Naive thymus-derived CD4-positive, alpha-beta T cell (primary cell): ENCODE measurements at regions of chr2 and their contacts with region 1.

Region 1: DNA sequence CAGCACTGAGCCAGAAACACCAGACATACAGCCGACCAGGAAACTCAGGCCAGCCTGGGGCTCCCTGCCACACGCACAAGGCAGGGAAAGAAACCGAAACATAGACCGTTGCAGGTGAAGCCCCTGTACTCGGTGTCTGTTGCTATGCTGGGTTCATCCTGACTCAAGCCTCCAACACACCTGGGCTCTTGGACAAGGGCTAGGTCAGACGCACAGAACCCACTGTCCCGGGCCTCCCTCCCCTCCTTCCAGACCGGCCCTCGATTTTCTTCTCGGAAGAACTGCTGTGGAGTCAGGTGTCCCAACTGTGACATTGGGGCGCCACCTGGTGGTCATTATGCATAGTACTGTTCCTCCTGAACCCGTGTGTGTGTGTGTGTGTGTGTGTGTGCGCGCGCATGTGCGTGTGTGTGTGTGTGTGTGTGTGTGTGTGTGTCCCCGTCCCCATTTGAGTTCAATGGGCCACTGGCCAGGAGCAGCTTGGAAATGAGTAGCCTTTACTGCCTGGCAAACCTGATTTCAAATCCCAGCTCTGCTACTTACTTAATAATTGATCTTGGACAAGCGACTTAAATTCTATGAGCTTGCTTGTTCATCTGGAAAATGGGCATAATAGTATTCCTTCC is 55.4 kb upstream of the GLI2 start:
- DNase-seq: peak; percentile 44 to 65 (median 59)
- ATAC-seq: peak; percentile 83
- H3K4me3 ChIP-seq: no peak overlapping the region
- H3K4me3 Mint-ChIP-seq: peak overlapping the region in 6 of 10 donors; percentile 0 to 48 (median 21)
- H3K27ac ChIP-seq: no peak overlapping the region
- H3K27ac Mint-ChIP-seq: peak overlapping the region in 6 of 9 donors; percentile 45 to 80 (median 72)
- H3K4me1 ChIP-seq: peaks cover 4% of the 10 kb centered on the region in 2 donors
- H3K4me1 Mint-ChIP-seq: peaks cover 0 to 5% (median 0%) of the 10 kb centered on the region in 7 donors
- H3K27me3 ChIP-seq: no peaks in the 10 kb centered on the region
- H3K27me3 Mint-ChIP-seq: peaks cover 18 to 50% (median 31%) of the 10 kb centered on the region in 5 donors

Region 2: GRCh38 chr2:118882709-118883210 is 1797.5 kb before region 1 on chr2:
- CTCF ChIA-PET with region 1: no interaction called
- POLR2A ChIA-PET with region 1: no interaction called
- intact Hi-C with region 1: loop called in 1 of 2 experiments (anchors 5 kb)
- DNase-seq: peak; percentile 27 to 74 (median 59)
- ATAC-seq: peak; percentile 92
- H3K4me3 ChIP-seq: peak overlapping the region; percentile 53
- H3K4me3 Mint-ChIP-seq: peak overlapping the region; percentile 49 to 84 (median 76)
- H3K27ac ChIP-seq: no peak overlapping the region
- H3K27ac Mint-ChIP-seq: peak overlapping the region in 7 of 9 donors; percentile 10 to 83 (median 75)
- H3K4me1 ChIP-seq: peaks cover 3 to 18% of the 10 kb centered on the region in 2 donors
- H3K4me1 Mint-ChIP-seq: peaks cover 7 to 24% (median 21%) of the 10 kb centered on the region in 7 donors
- H3K27me3 ChIP-seq: no peaks in the 10 kb centered on the region
- H3K27me3 Mint-ChIP-seq: peaks cover 0 to 17% (median 11%) of the 10 kb centered on the region in 5 donors

Region 3: DNA sequence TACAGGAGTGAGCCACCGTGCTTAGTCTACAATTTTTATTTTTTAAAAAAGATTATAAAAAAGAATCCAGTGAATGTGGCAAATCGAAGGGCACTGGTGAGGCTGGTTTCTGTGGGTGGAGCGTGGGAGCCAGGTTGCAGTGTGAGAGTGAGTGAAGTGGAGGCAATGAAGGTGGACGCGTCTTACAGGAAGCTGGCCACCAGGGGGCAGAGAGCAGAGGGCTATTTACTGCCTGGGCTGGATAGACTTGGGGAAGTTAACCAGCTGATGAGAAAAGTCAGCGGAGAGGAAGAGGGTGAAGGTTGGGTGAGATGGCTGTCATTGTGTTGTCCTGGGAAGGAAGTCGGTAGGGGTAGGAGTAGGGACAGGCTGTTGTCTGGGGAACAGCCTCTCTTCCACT is 1162.8 kb before region 1 on chr2:
- CTCF ChIA-PET with region 1: no interaction called
- POLR2A ChIA-PET with region 1: no interaction called
- intact Hi-C with region 1: loop called in 1 of 2 experiments (anchors 2 kb)
- DNase-seq: peak in 5 of 9 donors; percentile 4 to 40 (median 18)
- ATAC-seq: peak; percentile 59
- H3K4me3 ChIP-seq: no peak overlapping the region
- H3K4me3 Mint-ChIP-seq: no peak overlapping the region
- H3K27ac ChIP-seq: no peak overlapping the region
- H3K27ac Mint-ChIP-seq: no peak overlapping the region
- H3K4me1 ChIP-seq: no peaks in the 10 kb centered on the region
- H3K4me1 Mint-ChIP-seq: no peaks in the 10 kb centered on the region
- H3K27me3 ChIP-seq: no peaks in the 10 kb centered on the region
- H3K27me3 Mint-ChIP-seq: peaks cover 13 to 55% (median 41%) of the 10 kb centered on the region in 5 donors

Region 4: DNA sequence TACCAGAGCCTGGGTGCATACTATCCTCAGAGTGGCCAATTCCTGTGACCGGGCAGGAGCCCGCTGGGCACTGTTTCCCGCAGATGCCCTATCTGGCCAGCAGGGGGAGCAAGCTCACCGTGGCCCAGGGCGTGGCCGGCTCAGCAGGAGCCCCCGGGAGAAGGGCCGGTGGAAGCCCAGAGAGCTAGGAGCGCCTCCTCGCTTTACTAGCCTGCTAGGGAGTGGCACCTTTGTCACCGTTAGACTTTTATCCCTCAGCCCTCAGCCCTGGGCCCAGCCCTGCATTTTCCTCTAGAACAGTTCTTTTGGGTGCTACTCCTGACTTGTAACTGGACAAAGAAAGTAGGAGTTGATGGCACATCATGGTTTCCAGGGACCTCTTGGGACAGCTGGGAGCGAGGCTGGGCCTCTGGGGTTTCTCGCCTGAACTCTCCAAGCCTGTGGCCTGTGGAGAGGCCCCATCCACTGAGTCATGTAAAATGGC is 977.3 kb before region 1 on chr2:
- CTCF ChIA-PET with region 1: no interaction called
- POLR2A ChIA-PET with region 1: no interaction called
- intact Hi-C with region 1: loop called (anchors 2 to 5 kb)
- DNase-seq: peak; percentile 26 to 69 (median 53)
- ATAC-seq: peak; percentile 92
- H3K4me3 ChIP-seq: peak overlapping the region; percentile 16
- H3K4me3 Mint-ChIP-seq: no peak overlapping the region
- H3K27ac ChIP-seq: no peak overlapping the region
- H3K27ac Mint-ChIP-seq: peak overlapping the region in 2 of 9 donors; percentile 6 to 56
- H3K4me1 ChIP-seq: peaks cover 6 to 9% of the 10 kb centered on the region in 2 donors
- H3K4me1 Mint-ChIP-seq: peaks cover 0 to 23% (median 13%) of the 10 kb centered on the region in 7 donors
- H3K27me3 ChIP-seq: no peaks in the 10 kb centered on the region
- H3K27me3 Mint-ChIP-seq: peaks cover 0 to 4% (median 0%) of the 10 kb centered on the region in 5 donors

Region 5: GRCh38 chr2:120109186-120110061 is 570.8 kb before region 1 on chr2:
- CTCF ChIA-PET with region 1: no interaction called
- POLR2A ChIA-PET with region 1: no interaction called
- intact Hi-C with region 1: loop called (anchors 1 kb)
- DNase-seq: peak in 7 of 9 donors; percentile 14 to 73 (median 67)
- ATAC-seq: peak; percentile 80
- H3K4me3 ChIP-seq: peak overlapping the region; percentile 34
- H3K4me3 Mint-ChIP-seq: peak overlapping the region; percentile 30 to 87 (median 70)
- H3K27ac ChIP-seq: peak overlapping the region; percentile 39
- H3K27ac Mint-ChIP-seq: peak overlapping the region; percentile 10 to 90 (median 72)
- H3K4me1 ChIP-seq: peaks cover 17 to 21% of the 10 kb centered on the region in 2 donors
- H3K4me1 Mint-ChIP-seq: peaks cover 19 to 44% (median 36%) of the 10 kb centered on the region in 7 donors
- H3K27me3 ChIP-seq: no peaks in the 10 kb centered on the region
- H3K27me3 Mint-ChIP-seq: peaks cover 0 to 33% (median 0%) of the 10 kb centered on the region in 5 donors

Region 6: GRCh38 chr2:120174963-120175581 is 505.2 kb before region 1 on chr2:
- CTCF ChIA-PET with region 1: no interaction called
- POLR2A ChIA-PET with region 1: no interaction called
- intact Hi-C with region 1: no loop called
- DNase-seq: peak in 7 of 9 donors; percentile 37 to 63 (median 56)
- ATAC-seq: no peak
- H3K4me3 ChIP-seq: no peak overlapping the region
- H3K4me3 Mint-ChIP-seq: peak overlapping the region in 5 of 10 donors; percentile 7 to 50 (median 20)
- H3K27ac ChIP-seq: peak overlapping the region; percentile 79
- H3K27ac Mint-ChIP-seq: peak overlapping the region in 8 of 9 donors; percentile 84 to 99 (median 96)
- H3K4me1 ChIP-seq: peaks cover 17 to 49% of the 10 kb centered on the region in 2 donors
- H3K4me1 Mint-ChIP-seq: peaks cover 13 to 53% (median 43%) of the 10 kb centered on the region in 7 donors
- H3K27me3 ChIP-seq: no peaks in the 10 kb centered on the region
- H3K27me3 Mint-ChIP-seq: peaks cover 0 to 3% (median 0%) of the 10 kb centered on the region in 5 donors